CD4-positive, alpha-beta T cell (primary cell): ENCODE measurements at regions of chr11 and their contacts with region 1.

Region 1: DNA sequence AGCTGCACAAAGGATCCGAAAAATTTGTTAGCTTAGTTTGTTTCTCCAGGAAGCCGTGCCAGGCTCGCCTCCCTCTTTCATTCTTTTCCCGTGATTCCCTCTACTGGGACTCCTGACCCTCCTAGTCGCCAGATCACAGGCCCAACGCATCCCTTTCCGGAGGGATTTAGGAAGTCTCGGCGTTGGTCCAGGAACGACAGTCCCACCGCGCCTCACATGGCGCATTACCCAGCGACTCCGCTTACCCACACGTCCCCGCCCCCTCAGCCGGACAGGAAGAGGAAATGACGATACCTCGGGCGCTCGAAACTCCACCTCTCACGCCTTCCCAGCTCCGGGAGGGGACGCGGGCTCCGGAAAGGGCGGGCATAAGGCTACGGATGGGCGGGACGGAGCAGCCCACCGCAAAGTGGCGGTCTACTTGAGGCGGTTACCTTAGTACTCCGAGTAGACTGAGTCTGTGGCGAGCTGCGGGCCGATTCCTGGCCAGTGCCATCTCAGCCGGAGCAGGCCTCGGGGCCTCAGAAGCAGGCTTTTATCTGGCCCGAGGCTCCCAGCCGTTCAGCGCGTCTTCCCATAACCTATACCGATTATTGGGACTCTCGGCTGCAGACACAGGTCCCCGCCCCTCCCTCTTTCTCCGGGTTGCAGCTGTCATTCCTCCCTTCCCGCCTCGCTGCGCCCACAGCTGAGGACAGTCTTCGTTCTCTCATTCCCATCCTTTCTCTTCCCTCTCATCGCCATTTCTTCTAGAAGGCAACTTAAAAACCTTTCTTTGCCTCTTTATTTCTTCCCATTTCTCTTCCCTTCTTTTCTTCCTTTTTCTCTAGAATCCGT is at the start of gene CCDC15:
- DNase-seq: peak; percentile 89 to 98 (median 94)
- ATAC-seq: peak; percentile 95
- H3K4me3 ChIP-seq: peak within 1 kb of the TSS; percentile 87
- H3K4me3 Mint-ChIP-seq: no peak within 1 kb of the TSS
- H3K27ac ChIP-seq: peak within 1 kb of the TSS; percentile 74 to 90
- H3K27ac Mint-ChIP-seq: no peak within 1 kb of the TSS
- H3K4me1 ChIP-seq: peaks cover 40% of the 10 kb centered on the region
- H3K4me1 Mint-ChIP-seq: no peaks in the 10 kb centered on the region
- H3K27me3 ChIP-seq: no peaks in the 10 kb centered on the region
- H3K27me3 Mint-ChIP-seq: no peaks in the 10 kb centered on the region
- CTCF ChIP-seq: no peak
- total RNA-seq, gene CCDC15: 0.89 to 1.1 TPM

Region 2: DNA sequence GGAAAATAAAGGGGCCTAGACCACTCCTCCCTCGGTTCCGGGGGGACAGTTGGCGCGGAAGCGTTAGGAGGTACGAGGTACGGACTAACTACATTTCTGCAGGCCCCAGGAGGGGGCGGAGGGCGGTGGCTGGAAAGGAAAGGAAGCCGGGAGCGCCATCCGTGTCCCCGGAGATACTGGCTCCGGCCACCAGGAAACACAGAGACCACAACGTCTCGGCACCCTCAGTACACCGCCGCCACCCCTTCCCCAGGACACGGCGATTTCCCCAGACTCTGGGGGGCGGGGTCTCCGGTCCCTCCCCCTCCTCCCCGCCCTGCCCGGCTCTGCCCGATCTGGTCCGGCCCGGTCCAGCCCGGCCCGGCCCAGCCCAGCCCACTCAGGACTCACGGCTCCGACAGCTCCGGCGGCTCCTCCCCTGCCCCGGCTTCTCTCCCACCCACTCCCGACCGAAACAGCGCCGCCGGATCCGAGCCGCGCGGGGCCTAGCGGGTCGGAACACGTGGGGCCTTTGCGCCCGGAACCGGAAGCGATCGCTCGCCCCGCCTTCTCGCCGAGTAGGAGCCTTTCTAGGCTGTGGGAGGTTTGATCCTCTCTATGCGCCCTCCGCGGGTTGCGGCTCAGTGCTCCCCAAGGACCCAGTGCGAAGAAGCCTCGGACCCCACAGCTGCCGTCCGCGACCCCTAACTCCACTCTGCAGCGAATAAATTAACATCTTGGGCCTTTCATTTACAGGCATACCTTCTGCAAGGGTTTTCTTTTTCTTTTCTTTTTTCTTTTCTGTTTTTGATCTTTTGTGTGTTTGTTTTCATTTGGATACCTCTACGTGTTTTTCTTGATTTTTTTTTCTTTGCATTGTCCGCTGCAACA is 1212.6 kb before region 1 on chr11 and contains the start of gene ZNF202:
- CTCF ChIA-PET with region 1: no interaction called
- POLR2A ChIA-PET with region 1: no interaction called
- intact Hi-C with region 1: loop called in 1 of 2 experiments (anchors 5 kb)
- DNase-seq: peak; percentile 81 to 95 (median 89)
- ATAC-seq: peak; percentile 93
- H3K4me3 ChIP-seq: peak within 1 kb of the TSS; percentile 98
- H3K4me3 Mint-ChIP-seq: peak within 1 kb of the TSS; percentile 97
- H3K27ac ChIP-seq: peak within 1 kb of the TSS; percentile 33 to 61
- H3K27ac Mint-ChIP-seq: peak within 1 kb of the TSS; percentile 86
- H3K4me1 ChIP-seq: peaks cover 19% of the 10 kb centered on the region
- H3K4me1 Mint-ChIP-seq: peaks cover 45% of the 10 kb centered on the region
- H3K27me3 ChIP-seq: no peaks in the 10 kb centered on the region
- H3K27me3 Mint-ChIP-seq: peaks cover 11% of the 10 kb centered on the region
- CTCF ChIP-seq: no peak
- total RNA-seq, gene ZNF202: 6.8 to 8.0 TPM

Region 3: GRCh38 chr11:124633355-124633754 is 320.6 kb before region 1 on chr11:
- CTCF ChIA-PET with region 1: no interaction called
- POLR2A ChIA-PET with region 1: no interaction called
- intact Hi-C with region 1: no loop called
- DNase-seq: no peak
- ATAC-seq: no peak
- H3K4me3 ChIP-seq: no peak overlapping the region
- H3K4me3 Mint-ChIP-seq: no peak overlapping the region
- H3K27ac ChIP-seq: no peak overlapping the region
- H3K27ac Mint-ChIP-seq: no peak overlapping the region
- H3K4me1 ChIP-seq: no peaks in the 10 kb centered on the region
- H3K4me1 Mint-ChIP-seq: no peaks in the 10 kb centered on the region
- H3K27me3 ChIP-seq: no peaks in the 10 kb centered on the region
- H3K27me3 Mint-ChIP-seq: no peaks in the 10 kb centered on the region
- CTCF ChIP-seq: no peak

Region 4: GRCh38 chr11:124739479-124740276 is 214.3 kb before region 1 on chr11 and contains the start of gene NRGN:
- CTCF ChIA-PET with region 1: no interaction called
- POLR2A ChIA-PET with region 1: no interaction called
- intact Hi-C with region 1: loop called in 1 of 2 experiments (anchors 10 kb)
- DNase-seq: peak; percentile 68 to 90 (median 80)
- ATAC-seq: peak; percentile 92
- H3K4me3 ChIP-seq: peak within 1 kb of the TSS; percentile 64
- H3K4me3 Mint-ChIP-seq: peak within 1 kb of the TSS; percentile 83
- H3K27ac ChIP-seq: no peak within 1 kb of the TSS
- H3K27ac Mint-ChIP-seq: no peak within 1 kb of the TSS
- H3K4me1 ChIP-seq: peaks cover 16% of the 10 kb centered on the region
- H3K4me1 Mint-ChIP-seq: peaks cover 21% of the 10 kb centered on the region
- H3K27me3 ChIP-seq: peaks cover 0 to 6% of the 10 kb centered on the region in 2 experiments
- H3K27me3 Mint-ChIP-seq: peaks cover 7% of the 10 kb centered on the region
- CTCF ChIP-seq: no peak
- total RNA-seq, gene NRGN: 0.84 to 1.4 TPM

Region 5: DNA sequence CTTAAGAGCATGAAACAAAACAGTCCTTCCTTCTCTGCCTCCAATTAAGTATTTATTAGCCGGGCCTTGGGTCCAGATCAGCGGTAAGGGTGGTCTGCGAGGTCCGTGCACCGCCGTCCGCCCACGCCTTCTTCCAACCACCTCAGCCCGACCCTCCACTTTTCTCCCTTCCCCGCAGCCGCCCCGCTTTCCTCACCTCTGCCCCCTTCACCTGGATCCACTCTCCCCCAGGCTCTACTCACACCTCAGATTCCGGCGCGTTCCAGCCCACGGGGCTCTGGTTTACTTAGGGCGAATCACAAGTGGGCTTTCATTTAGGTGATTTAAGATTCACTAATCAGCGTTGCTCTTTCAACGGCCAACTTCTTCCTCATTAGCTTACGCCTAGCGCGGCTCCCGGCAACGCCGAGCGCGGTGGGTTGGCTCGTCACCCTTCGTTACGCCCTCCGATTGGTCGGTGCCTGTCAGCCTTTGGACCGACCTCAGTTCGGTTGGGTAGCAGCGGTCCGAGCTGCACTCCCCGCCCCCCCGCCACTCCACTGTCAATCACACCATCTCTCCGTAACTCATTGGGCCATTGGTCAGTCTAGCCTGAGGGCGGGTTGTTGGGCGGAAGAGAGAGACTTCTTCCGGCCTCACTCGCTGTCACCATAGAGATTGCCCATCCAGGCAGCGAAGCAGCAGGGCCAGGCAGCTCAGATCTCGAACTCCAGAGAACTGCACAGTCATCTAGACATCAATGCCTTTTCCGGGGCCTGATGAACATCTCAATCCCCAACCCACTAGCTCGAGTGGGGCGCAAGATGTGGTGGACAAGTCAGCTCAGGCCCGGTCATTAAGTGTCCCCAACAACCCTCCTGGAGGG is 157.6 kb after region 1 on chr11 and contains the start of gene TMEM218:
- CTCF ChIA-PET with region 1: no interaction called
- POLR2A ChIA-PET with region 1: interaction called, 16 read pairs
- intact Hi-C with region 1: loop called in 1 of 2 experiments (anchors 1 kb)
- DNase-seq: peak; percentile 89 to 99 (median 92)
- ATAC-seq: peak; percentile 94
- H3K4me3 ChIP-seq: peak within 1 kb of the TSS; percentile 90
- H3K4me3 Mint-ChIP-seq: peak within 1 kb of the TSS; percentile 97
- H3K27ac ChIP-seq: peak within 1 kb of the TSS; percentile 29 to 77
- H3K27ac Mint-ChIP-seq: peak within 1 kb of the TSS; percentile 84
- H3K4me1 ChIP-seq: peaks cover 16% of the 10 kb centered on the region
- H3K4me1 Mint-ChIP-seq: peaks cover 26% of the 10 kb centered on the region
- H3K27me3 ChIP-seq: no peaks in the 10 kb centered on the region
- H3K27me3 Mint-ChIP-seq: no peaks in the 10 kb centered on the region
- CTCF ChIP-seq: no peak
- total RNA-seq, gene TMEM218: 3.9 to 4.4 TPM

Region 6: DNA sequence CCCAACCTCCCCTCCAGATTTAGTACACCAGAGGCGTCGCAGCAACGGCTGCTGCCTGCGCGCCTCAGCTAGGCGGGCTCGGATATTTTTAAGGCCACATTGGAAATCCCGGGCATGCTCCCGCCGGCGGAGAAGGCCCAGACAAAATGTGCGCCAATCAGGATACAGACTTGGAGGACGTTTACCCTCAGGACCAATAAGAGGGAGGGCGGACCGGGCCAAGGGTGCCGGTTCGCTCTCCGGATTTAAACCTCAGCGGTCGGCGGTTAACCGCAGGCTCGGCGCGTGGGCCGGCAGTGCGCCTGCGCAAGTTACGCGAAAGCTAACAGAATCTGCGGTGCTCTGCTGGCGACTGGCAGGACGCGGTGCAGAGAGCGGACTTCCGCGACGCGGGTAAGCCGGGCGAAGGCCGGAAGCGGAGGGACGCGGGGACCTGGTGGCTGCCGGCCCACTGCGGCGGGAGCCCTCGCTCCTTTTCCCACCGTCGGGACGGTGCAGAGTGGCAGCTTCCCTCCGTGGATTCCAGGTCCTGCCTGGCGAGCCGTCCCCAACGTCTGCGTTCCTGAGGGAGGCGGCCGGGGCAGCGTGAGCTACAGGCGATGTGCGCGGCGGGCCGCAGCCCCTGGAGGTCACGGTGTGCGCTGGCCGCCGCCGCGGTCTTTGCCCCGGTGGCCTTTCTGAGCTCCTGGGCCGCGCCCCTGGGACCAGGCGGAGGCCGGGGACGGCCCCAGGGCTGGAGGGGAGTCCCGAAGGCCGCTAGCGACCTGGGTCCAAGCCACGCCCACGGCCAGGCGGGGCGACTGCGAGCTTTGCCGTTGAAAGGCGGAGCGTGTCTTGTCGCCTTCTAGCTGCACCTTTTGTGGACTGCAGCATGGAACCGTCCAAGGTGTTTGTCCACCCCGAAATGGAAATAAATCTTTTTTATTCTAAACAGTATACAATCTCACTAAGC is 933.7 kb after region 1 on chr11 and contains the start of gene HYLS1:
- CTCF ChIA-PET with region 1: no interaction called
- POLR2A ChIA-PET with region 1: no interaction called
- intact Hi-C with region 1: loop called in 1 of 2 experiments (anchors 5 kb)
- DNase-seq: peak; percentile 87 to 98 (median 91)
- ATAC-seq: peak; percentile 88
- H3K4me3 ChIP-seq: peak within 1 kb of the TSS; percentile 63
- H3K4me3 Mint-ChIP-seq: peak within 1 kb of the TSS; percentile 95
- H3K27ac ChIP-seq: peak within 1 kb of the TSS; percentile 71 to 78
- H3K27ac Mint-ChIP-seq: peak within 1 kb of the TSS; percentile 92
- H3K4me1 ChIP-seq: peaks cover 20% of the 10 kb centered on the region
- H3K4me1 Mint-ChIP-seq: peaks cover 50% of the 10 kb centered on the region
- H3K27me3 ChIP-seq: no peaks in the 10 kb centered on the region
- H3K27me3 Mint-ChIP-seq: no peaks in the 10 kb centered on the region
- CTCF ChIP-seq: no peak
- total RNA-seq, gene HYLS1: 1.2 to 1.3 TPM

Region 7: GRCh38 chr11:126211235-126212088 is 1257.5 kb after region 1 on chr11 and contains the starts of genes FAM118B and RPUSD4:
- CTCF ChIA-PET with region 1: no interaction called
- POLR2A ChIA-PET with region 1: no interaction called
- intact Hi-C with region 1: loop called in 1 of 2 experiments (anchors 10 kb)
- DNase-seq: peak; percentile 96 to 100 (median 98)
- ATAC-seq: peak; percentile 97
- H3K4me3 ChIP-seq: peak within 1 kb of the TSS; percentile 99
- H3K4me3 Mint-ChIP-seq: peak within 1 kb of the TSS; percentile 100
- H3K27ac ChIP-seq: peak within 1 kb of the TSS; percentile 50 to 78
- H3K27ac Mint-ChIP-seq: peak within 1 kb of the TSS; percentile 93
- H3K4me1 ChIP-seq: peaks cover 21% of the 10 kb centered on the region
- H3K4me1 Mint-ChIP-seq: peaks cover 61% of the 10 kb centered on the region
- H3K27me3 ChIP-seq: no peaks in the 10 kb centered on the region
- H3K27me3 Mint-ChIP-seq: no peaks in the 10 kb centered on the region
- CTCF ChIP-seq: no peak
- total RNA-seq, gene FAM118B: 1.0 to 1.8 TPM
- total RNA-seq, gene RPUSD4: 33.1 to 37.6 TPM